AG04449 (cell line): ENCODE measurements at regions of chr5 and their contacts with region 1.

Region 1: DNA sequence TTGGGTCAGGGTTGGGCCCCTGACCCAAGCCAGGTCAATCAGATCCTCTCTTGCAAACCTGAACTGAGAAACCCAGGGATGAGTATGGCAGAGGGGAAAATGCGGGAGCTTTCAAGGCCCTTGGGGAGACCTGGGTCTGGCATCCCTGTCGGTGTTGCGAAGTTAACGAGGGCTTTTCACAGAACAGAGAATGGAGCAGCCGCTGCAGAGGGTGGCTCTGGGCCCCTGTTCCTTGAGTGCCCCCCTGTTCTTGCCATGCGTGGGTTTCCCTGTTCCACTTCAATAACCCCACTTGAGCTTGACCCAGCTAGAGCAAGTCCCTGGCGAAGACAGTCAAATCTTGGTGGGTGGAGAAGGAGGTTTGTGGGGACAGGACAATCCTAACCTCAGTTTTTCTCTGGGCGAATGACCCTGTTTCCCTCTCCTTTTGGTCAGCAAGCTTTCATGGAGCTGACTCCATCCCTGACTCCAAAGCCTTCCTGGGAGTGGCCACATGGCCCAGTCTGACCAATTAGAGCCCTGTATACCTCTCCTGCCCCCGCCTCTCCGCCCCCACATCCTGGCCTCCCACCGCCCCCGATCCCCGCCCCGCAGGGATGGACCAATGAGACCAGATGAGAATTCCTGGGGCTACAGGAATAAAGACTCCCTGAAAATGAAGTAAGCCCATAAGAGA is 2.9 kb upstream of the VDAC1 start:
- DNase-seq: no peak
- H3K4me3 ChIP-seq: no peak overlapping the region
- CTCF ChIP-seq: no peak

Region 2: GRCh38 chr5:133868946-133869518 is 138.7 kb before region 1 on chr5:
- CTCF ChIA-PET with region 1: no interaction called
- POLR2A ChIA-PET with region 1: no interaction called
- DNase-seq: no peak
- H3K4me3 ChIP-seq: no peak overlapping the region
- CTCF ChIP-seq: peak; percentile 79

Region 3: GRCh38 chr5:134026521-134027268 is 19.0 kb after region 1 on chr5:
- CTCF ChIA-PET with region 1: interaction called, 11 read pairs
- POLR2A ChIA-PET with region 1: no interaction called
- DNase-seq: no peak
- H3K4me3 ChIP-seq: no peak overlapping the region
- CTCF ChIP-seq: peak; percentile 74